ENCODE measurements at regions of chr14 and their contacts with region 1.

Region 1: GRCh38 chr14:68506021-68506644 is 286.7 kb downstream of the ZFP36L1 start:
- DNase-seq: peak; percentile 76
- H3K4me3 ChIP-seq: no peak overlapping the region
- H3K27ac ChIP-seq: peak overlapping the region; percentile 60
- H3K4me1 ChIP-seq: peaks cover 24% of the 10 kb centered on the region
- H3K27me3 ChIP-seq: no peaks in the 10 kb centered on the region
- CTCF ChIP-seq: no peak

Region 2: GRCh38 chr14:68444449-68445168 is 61.5 kb before region 1 on chr14:
- CTCF ChIA-PET with region 1: no interaction called
- dilution Hi-C with region 1: loop called (anchors 5 kb)
- in situ Hi-C with region 1: no loop called
- intact Hi-C with region 1: no loop called
- DNase-seq: peak; percentile 46
- H3K4me3 ChIP-seq: no peak overlapping the region
- H3K27ac ChIP-seq: no peak overlapping the region
- H3K4me1 ChIP-seq: peaks cover 30% of the 10 kb centered on the region
- H3K27me3 ChIP-seq: no peaks in the 10 kb centered on the region
- CTCF ChIP-seq: no peak

Region 3: GRCh38 chr14:68476212-68476907 is 29.8 kb before region 1 on chr14:
- CTCF ChIA-PET with region 1: no interaction called
- dilution Hi-C with region 1: no loop called
- in situ Hi-C with region 1: no loop called
- intact Hi-C with region 1: loop called (anchors 5 kb)
- DNase-seq: peak; percentile 93
- H3K4me3 ChIP-seq: no peak overlapping the region
- H3K27ac ChIP-seq: peak overlapping the region; percentile 95
- H3K4me1 ChIP-seq: peaks cover 54% of the 10 kb centered on the region
- H3K27me3 ChIP-seq: no peaks in the 10 kb centered on the region
- CTCF ChIP-seq: no peak

Region 4: GRCh38 chr14:68563246-68564131 is 57.4 kb after region 1 on chr14:
- CTCF ChIA-PET with region 1: no interaction called
- dilution Hi-C with region 1: loop called (anchors 10 kb)
- in situ Hi-C with region 1: no loop called
- intact Hi-C with region 1: no loop called
- DNase-seq: peak; percentile 43
- H3K4me3 ChIP-seq: no peak overlapping the region
- H3K27ac ChIP-seq: no peak overlapping the region
- H3K4me1 ChIP-seq: peaks cover 9% of the 10 kb centered on the region
- H3K27me3 ChIP-seq: no peaks in the 10 kb centered on the region
- CTCF ChIP-seq: no peak

Region 5: DNA sequence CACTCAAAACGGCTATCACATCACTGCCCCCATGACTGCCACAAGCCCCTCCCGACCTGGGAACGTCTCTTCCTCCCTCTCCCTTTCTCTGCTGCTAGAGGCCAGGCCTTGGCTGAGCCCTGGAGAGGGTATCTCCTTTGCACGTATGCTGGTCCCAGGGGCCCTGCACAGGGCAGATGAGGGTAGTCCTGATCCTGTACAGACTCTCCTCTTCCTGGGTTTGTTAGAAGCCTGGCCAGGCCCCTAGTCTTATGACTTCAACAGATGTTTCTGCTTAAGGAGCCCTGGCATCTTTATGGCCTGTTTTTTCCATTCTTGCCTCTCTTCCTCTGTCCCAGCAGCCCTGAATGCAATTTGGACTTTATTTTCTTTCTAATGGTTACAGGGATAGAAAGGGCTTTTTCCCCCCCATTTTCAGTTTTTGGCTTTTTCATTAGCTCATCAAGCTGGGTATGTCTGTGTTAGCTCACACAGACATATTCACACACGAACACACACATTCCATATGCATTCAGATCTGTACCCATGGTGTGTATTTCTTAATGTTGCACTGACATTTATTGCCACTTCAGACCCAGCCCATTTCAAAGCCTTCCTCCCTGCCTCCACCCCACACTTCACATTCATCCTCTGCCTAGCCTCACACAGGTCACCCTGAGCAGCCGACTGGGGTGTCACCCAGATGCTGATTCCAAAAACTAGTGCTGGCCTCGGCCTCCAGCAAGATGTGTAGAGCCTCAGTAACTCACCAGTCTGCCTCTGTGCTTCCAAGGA is 83.5 kb after region 1 on chr14:
- CTCF ChIA-PET with region 1: no interaction called
- dilution Hi-C with region 1: loop called (anchors 5 kb)
- in situ Hi-C with region 1: no loop called
- intact Hi-C with region 1: no loop called
- DNase-seq: no peak
- H3K4me3 ChIP-seq: no peak overlapping the region
- H3K27ac ChIP-seq: no peak overlapping the region
- H3K4me1 ChIP-seq: peaks cover 13% of the 10 kb centered on the region
- H3K27me3 ChIP-seq: no peaks in the 10 kb centered on the region
- CTCF ChIP-seq: no peak

Measured in mammary epithelial cell (primary cell).